ENCODE measurements at regions of chr1 and their contacts with region 1.

Region 1: GRCh38 chr1:95043141-95043980 is 29.4 kb downstream of the ALG14 start:
- DNase-seq: peak; percentile 87
- H3K4me3 ChIP-seq: no peak overlapping the region
- H3K27ac ChIP-seq: no peak overlapping the region
- H3K4me1 ChIP-seq: no peaks in the 10 kb centered on the region
- H3K27me3 ChIP-seq: no peaks in the 10 kb centered on the region
- CTCF ChIP-seq: peak; percentile 92 to 98
- POLR2A ChIP-seq: no peak

Region 2: GRCh38 chr1:94514095-94514727 is 529.1 kb before region 1 on chr1:
- CTCF ChIA-PET with region 1: interaction called, 20 read pairs
- POLR2A ChIA-PET with region 1: no interaction called
- dilution Hi-C with region 1: no loop called
- intact Hi-C with region 1: loop called (anchors 2 kb)
- DNase-seq: peak; percentile 46
- H3K4me3 ChIP-seq: no peak overlapping the region
- H3K27ac ChIP-seq: no peak overlapping the region
- H3K4me1 ChIP-seq: no peaks in the 10 kb centered on the region
- H3K27me3 ChIP-seq: no peaks in the 10 kb centered on the region
- CTCF ChIP-seq: peak; percentile 55 to 67
- POLR2A ChIP-seq: no peak

Region 3: DNA sequence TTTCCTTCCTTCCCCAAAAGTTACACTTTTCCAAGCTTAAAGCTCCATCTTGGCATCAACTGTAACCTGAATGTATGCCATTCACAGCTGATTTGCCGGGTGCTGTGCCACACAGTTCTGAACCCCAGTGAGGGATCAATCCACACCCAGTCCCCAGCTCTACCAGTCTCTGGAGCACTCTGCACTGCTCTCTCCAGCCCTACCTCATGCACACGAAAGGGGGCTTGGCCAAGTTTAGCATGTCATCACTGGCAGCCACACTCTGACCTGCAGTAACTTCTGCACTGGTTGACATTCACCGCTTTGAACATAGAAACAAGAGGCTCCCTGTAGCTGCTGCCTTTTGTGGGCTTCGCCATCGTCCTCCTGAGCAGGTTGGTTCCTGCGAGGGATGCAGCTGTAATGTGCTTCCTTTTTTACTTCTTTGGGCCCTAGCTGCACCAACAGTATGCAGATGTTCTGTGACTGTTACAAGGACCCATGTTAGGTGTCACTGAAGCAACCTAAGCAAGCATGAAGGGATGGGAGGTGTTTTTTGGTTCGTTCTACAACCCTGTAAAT is 358.6 kb before region 1 on chr1:
- CTCF ChIA-PET with region 1: no interaction called
- POLR2A ChIA-PET with region 1: no interaction called
- dilution Hi-C with region 1: no loop called
- intact Hi-C with region 1: no loop called
- DNase-seq: no peak
- H3K4me3 ChIP-seq: no peak overlapping the region
- H3K27ac ChIP-seq: no peak overlapping the region
- H3K4me1 ChIP-seq: no peaks in the 10 kb centered on the region
- H3K27me3 ChIP-seq: peaks cover 7 to 8% of the 10 kb centered on the region in 2 experiments
- CTCF ChIP-seq: no peak
- POLR2A ChIP-seq: no peak

Region 4: DNA sequence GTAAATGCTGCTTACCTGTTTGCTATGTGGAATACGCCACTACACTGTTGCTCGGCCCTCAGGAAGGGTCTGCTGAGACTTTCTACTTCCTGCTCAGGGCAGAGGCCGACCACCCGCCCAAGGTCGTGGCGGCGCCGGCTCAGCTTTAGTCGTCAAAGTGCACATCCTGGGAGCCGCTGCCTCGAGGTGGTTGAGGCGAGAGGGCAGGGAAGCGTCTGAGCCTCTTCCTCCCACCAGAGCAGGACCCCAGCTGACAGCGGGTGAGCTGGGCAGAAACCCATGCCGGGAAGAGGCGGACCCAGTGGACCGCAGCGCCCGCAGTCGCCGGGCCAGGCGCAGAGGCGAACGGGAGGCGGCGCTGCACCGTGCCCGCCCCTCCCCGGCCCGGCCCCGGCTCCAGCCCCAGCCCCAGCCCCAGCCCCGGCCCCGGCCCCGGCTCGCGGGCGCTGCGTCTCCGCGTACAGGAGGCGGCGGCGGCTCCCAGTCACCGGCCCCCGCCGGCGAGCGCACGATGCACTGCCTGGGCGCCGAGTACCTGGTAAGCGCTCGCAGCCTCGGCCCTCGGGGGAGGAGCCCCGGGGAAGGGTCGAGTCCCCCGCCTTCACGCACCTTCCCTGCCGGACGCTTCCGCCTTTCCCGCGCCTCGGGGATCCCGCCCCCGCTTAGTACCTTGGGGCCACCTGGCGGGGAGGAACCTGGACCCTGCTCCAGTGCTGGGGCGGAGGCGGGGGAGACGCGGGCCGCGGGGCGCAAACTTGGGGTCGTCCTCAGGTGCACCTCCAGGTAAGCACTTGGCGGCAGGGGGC is 223.2 kb before region 1 on chr1 and contains the start of gene SLC44A3:
- CTCF ChIA-PET with region 1: interaction called, 17 read pairs
- POLR2A ChIA-PET with region 1: no interaction called
- dilution Hi-C with region 1: no loop called
- intact Hi-C with region 1: no loop called
- DNase-seq: peak; percentile 33
- H3K4me3 ChIP-seq: peak within 1 kb of the TSS in 2 of 3 experiments; percentile 51 to 56
- H3K27ac ChIP-seq: no peak within 1 kb of the TSS
- H3K4me1 ChIP-seq: peaks cover 2% of the 10 kb centered on the region
- H3K27me3 ChIP-seq: peaks cover 42 to 49% of the 10 kb centered on the region in 2 experiments
- CTCF ChIP-seq: peak in 1 of 2 donors; percentile 45
- POLR2A ChIP-seq: no peak
- total RNA-seq, gene SLC44A3: 0.42 and 0.58 TPM in 2 replicates

Region 5: DNA sequence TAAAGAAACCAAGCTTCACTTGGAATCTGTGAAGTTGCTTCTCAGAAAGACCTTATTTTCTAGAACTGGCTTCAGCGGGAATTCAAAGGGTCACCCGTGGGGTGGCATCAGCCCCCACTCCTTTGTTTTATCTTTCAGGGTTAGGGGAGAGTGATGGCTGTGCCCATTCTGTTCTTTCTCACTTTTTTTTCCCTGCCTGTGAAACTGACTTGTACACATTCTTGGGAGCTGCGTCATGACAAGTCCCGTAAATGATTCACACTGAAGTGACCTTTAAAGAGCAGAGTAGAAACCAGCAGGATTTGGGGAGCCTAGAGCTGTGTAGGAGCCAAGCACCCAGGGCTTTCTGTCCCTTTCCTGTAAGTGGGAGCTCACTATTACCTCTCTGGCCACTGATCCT is 179.4 kb before region 1 on chr1:
- CTCF ChIA-PET with region 1: interaction called, 56 read pairs
- POLR2A ChIA-PET with region 1: no interaction called
- dilution Hi-C with region 1: no loop called
- intact Hi-C with region 1: no loop called
- DNase-seq: peak; percentile 83
- H3K4me3 ChIP-seq: peak overlapping the region in 1 of 3 experiments; percentile 47
- H3K27ac ChIP-seq: peak overlapping the region; percentile 92
- H3K4me1 ChIP-seq: peaks cover 33% of the 10 kb centered on the region
- H3K27me3 ChIP-seq: peaks cover 0 to 1% of the 10 kb centered on the region in 2 experiments
- CTCF ChIP-seq: no peak
- POLR2A ChIP-seq: no peak

Region 6: DNA sequence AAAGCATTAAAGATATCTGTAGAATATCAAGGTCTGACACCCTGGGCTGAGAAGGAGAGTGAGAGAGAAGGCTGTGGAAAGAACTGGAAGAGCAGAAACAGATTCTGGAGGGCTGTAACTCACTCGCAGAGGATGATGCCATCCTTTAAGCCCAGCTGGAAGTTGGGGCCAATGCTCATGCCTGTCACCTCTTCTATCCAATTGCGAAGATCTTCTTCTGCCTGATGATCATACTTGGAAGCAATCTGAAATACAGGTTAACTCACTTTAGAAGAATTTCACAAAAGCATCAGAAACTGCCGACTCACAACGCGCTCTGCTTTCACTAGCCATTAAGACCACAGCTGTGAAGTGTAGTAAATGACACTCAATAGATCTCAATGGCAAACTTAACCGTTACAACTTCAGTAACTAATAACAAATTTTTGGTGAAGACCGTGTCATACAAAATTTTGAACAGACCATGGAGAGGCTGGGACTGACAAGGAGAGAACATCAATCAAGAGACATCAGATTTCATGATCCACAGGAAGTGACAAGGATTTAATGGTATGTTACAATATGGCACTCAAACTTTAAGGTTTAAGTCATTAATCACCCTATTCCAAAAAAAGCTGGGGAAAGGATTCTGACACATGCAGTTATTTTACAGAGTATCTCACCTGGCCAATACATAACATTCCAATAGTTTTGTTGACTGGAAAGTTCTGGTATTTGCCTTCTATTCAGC is 139.9 kb before region 1 on chr1:
- CTCF ChIA-PET with region 1: interaction called, 38 read pairs
- POLR2A ChIA-PET with region 1: no interaction called
- dilution Hi-C with region 1: loop called (anchors 25 kb)
- intact Hi-C with region 1: loop called (anchors 1 kb)
- DNase-seq: no peak
- H3K4me3 ChIP-seq: no peak overlapping the region
- H3K27ac ChIP-seq: no peak overlapping the region
- H3K4me1 ChIP-seq: peaks cover 3% of the 10 kb centered on the region
- H3K27me3 ChIP-seq: no peaks in the 10 kb centered on the region
- CTCF ChIP-seq: no peak
- POLR2A ChIP-seq: no peak

Region 7: GRCh38 chr1:94962409-94963265 is 80.7 kb before region 1 on chr1:
- CTCF ChIA-PET with region 1: interaction called, 19 read pairs
- POLR2A ChIA-PET with region 1: no interaction called
- dilution Hi-C with region 1: no loop called
- intact Hi-C with region 1: no loop called
- DNase-seq: peak; percentile 75
- H3K4me3 ChIP-seq: peak overlapping the region; percentile 22 to 68 (median 25)
- H3K27ac ChIP-seq: peak overlapping the region; percentile 48
- H3K4me1 ChIP-seq: peaks cover 23% of the 10 kb centered on the region
- H3K27me3 ChIP-seq: no peaks in the 10 kb centered on the region
- CTCF ChIP-seq: no peak
- POLR2A ChIP-seq: no peak

Region 8: GRCh38 chr1:95029532-95029931 is 13.8 kb before region 1 on chr1:
- CTCF ChIA-PET with region 1: interaction called, 16 read pairs
- POLR2A ChIA-PET with region 1: no interaction called
- dilution Hi-C with region 1: no loop called
- intact Hi-C with region 1: loop called (anchors 2 kb)
- DNase-seq: no peak
- H3K4me3 ChIP-seq: no peak overlapping the region
- H3K27ac ChIP-seq: no peak overlapping the region
- H3K4me1 ChIP-seq: peaks cover 11% of the 10 kb centered on the region
- H3K27me3 ChIP-seq: no peaks in the 10 kb centered on the region
- CTCF ChIP-seq: no peak
- POLR2A ChIP-seq: no peak